Head of caudate nucleus (tissue), 42 donors: ENCODE measurements at regions of chr1 and their contacts with region 1.

Region 1: DNA sequence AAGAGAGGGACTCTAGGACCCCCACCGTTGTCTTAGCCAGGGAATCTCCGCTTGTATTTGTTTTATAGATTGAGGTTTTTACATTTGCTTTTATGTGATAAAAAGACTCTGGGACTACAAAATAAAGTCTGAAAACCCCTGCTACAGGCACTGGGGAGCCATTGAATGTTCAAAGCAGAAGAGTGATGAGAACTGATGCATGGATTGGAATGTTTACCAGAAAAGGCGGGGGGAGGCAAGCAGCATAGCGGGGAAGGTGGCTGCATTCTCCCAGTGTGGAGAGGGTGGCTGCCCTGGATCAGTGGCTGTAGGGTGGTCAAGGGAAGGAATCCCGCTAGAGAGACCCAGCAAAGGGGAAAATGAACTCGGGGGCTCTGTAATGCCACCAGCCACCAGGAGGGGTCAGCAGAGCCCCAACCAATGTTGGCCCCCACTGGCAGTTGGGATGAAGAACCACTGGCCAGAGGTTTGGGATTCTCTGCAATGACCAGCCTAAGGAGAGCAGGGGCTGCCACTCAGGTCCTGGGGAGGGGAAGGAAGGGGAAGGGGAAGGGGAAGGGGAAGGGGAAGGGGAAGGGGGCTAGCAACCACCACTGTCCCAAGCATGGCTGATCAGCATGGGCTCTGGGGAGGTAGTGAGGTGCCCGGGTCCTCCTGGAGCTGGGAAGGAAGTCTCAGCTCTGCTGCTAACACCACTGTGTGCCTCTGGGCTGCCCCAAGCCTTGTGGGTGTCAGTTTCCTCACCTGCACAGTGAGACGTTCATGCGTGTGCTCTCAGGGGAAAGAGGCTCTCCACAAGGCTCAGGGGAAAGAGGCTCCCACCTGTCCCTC is 19.2 kb upstream of the PEF1 start:
- DNase-seq: peak in 41 of 42 donors; percentile 45 to 91 (median 73)

Region 2: DNA sequence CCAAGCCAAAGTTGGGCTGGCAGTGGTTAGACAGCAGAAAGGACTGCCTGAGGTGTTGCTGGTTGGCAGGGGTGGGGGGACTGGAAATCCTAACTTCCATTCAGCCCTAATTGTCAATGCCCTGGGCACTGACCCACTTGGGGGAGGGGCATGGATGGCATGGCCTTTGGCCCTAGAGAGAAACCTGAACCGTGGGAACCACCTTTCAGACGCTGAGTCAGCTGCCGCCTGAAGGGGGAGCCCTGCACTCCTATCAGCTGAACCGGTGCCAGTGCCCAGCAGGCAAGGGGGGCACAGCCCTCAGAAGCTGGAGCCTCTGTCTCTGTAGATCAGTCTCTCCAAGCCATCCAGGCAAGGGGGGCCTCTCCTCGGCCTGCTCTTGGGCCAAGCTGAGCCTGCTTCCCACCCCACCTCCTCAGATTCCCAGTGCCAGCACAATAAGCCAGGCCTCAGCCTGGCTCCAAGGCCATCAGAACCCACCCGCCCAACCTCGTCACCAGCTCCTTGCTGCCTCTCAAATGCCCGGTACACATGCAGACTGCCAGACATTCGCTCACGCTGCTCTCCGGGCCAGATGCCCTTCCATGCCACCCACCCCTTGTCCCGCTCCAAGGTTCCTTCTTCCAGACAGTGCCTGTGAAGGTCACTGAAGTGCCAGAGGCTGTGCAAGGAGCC is 76.0 kb before region 1 on chr1:
- intact Hi-C with region 1: no loop called
- DNase-seq: peak; percentile 21 to 77 (median 52)

Region 3: DNA sequence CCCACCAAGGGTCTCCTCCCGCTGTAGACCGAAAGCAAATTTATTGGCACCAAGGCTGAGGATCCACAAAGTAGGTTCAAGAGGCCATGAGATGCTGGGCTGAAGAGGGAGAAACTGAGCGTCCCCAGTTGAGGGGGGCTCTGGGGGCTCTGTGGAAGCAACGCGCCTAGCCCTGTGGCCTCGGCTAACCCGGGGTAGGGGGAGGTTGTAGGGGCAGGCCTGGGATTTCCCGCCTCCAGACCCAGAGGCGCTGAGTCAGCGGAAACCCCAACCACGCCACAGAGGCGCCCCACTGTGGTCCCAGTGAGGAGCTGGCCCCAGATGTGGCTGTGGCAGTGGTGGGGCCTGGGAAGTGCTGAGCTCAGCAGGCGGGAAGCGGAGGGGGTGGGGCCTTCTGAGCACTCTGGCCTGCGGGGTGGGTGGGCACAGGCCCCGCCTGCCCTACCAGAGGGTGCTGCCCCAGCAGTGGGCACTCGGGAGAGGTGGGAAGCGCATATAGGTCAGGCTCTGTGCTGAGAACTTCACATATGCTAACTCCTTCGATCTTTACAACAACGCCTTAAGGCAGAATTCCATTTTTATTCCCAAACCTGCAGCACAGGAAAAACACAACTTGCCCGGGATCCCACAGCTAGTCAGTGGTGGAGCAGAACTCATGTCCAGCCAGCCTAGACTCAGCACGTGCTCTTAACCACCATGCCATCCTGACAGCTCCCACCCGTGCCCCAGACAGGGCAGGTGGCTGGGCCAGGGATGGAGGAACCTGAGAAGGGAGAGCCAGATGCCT is 41.4 kb after region 1 on chr1:
- intact Hi-C with region 1: loop called (anchors 2 kb)
- DNase-seq: peak; percentile 41 to 92 (median 72)